Adrenal gland (tissue), 19 donors: ENCODE measurements at regions of chr19 and their contacts with region 1.

Region 1: DNA sequence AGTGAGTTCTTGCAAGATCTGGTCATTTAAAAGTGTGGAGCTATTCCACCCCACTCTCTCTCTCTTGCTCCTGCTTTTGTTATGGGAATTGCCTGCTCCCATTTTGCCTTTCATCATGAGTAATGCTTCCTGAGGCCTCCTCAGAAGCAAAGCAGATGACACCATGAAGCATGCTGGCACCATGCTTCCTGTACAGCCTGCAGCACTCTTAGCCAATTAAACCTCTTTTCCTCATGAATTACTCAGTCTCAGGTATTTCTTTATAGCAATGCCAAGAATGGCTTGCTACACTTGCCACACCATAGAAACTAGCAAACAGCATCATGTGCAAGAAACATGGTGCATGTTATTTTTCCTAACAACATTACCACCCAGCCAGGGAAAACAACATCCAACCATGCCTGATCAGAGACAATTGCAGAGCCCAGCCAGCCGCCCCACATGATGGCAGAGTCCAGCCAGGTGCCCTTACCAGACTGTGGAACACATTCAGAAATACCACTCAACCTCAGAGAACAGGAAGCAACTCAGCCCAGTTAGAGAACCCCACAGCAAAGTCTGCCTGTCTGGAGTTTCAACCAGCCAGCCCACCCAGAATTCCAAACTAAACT is 36.9 kb downstream of the SYDE1 start:
- DNase-seq: no peak
- H3K4me3 ChIP-seq: no peak overlapping the region
- H3K27ac ChIP-seq: no peak overlapping the region
- H3K4me1 ChIP-seq: no peaks in the 10 kb centered on the region
- H3K27me3 ChIP-seq: no peaks in the 10 kb centered on the region
- CTCF ChIP-seq: no peak
- POLR2A ChIP-seq: no peak

Region 2: GRCh38 chr19:14871619-14872230 is 272.4 kb before region 1 on chr19:
- intact Hi-C with region 1: loop called in 1 of 2 experiments (anchors 10 kb)
- DNase-seq: no peak
- H3K4me3 ChIP-seq: no peak overlapping the region
- H3K27ac ChIP-seq: no peak overlapping the region
- H3K4me1 ChIP-seq: no peaks in the 10 kb centered on the region
- H3K27me3 ChIP-seq: peaks cover 4% of the 10 kb centered on the region
- CTCF ChIP-seq: peak; percentile 50 to 83 (median 62)
- POLR2A ChIP-seq: no peak